CD8-positive, alpha-beta memory T cell (primary cell): ENCODE measurements at regions of chr14 and their contacts with region 1.

Region 1: DNA sequence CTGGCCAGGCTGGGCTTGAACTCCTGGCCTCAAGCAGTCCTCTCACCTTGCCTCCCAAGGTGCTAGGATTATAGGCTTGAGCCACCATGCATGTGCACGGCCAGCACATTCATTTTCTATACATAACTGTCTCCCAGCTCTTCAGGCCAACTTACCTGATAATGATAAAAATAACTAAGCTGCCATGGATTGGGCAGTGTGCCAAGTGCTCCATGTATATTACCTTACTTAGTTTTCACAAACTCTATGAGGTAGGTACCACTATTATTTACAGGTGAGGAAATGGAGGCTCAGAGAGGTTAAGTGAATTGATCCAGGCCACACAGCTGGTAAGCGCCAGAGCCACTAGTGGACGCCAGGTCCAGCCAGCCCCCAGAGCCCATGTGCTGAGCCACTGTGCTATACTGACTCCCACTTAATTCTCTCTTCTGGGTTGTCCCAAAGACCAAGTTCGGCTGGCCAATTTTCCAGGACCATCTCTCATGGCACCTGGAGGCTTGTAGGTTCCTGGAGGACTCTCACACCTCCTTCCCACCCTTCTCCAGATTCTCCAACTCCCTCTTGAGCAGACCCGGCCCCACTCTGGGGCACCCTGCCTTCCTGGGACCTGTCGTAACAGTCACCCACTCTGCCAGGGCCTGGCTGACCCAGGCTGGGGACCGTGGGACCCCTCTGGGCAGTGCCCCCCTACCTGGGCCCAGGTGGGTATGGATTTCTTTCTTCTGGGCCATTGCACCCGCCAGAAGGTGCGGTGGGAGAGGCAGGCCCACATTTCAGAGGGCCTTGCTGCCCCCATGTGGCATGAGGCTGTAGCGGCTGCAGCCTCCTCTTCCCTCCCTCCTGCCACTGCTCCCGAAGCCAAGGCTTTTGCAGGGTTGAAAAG is 30.2 kb upstream of the CIPC start:
- DNase-seq: peak; percentile 25 to 64 (median 34)
- H3K4me3 ChIP-seq: no peak overlapping the region
- H3K4me3 Mint-ChIP-seq: no peak overlapping the region
- H3K27ac ChIP-seq: no peak overlapping the region
- H3K27ac Mint-ChIP-seq: no peak overlapping the region
- H3K4me1 ChIP-seq: no peaks in the 10 kb centered on the region
- H3K4me1 Mint-ChIP-seq: no peaks in the 10 kb centered on the region
- H3K27me3 ChIP-seq: peaks cover 16% of the 10 kb centered on the region
- H3K27me3 Mint-ChIP-seq: peaks cover 11 to 29% of the 10 kb centered on the region in 2 donors

Region 2: GRCh38 chr14:76887196-76887595 is 180.7 kb before region 1 on chr14:
- CTCF ChIA-PET with region 1: interaction called, 14 read pairs
- POLR2A ChIA-PET with region 1: no interaction called
- DNase-seq: no peak
- H3K4me3 ChIP-seq: no peak overlapping the region
- H3K4me3 Mint-ChIP-seq: no peak overlapping the region
- H3K27ac ChIP-seq: no peak overlapping the region
- H3K27ac Mint-ChIP-seq: peak overlapping the region in 1 of 8 donors; percentile 61
- H3K4me1 ChIP-seq: no peaks in the 10 kb centered on the region
- H3K4me1 Mint-ChIP-seq: no peaks in the 10 kb centered on the region
- H3K27me3 ChIP-seq: no peaks in the 10 kb centered on the region
- H3K27me3 Mint-ChIP-seq: peaks cover 3 to 15% of the 10 kb centered on the region in 2 donors

Region 3: GRCh38 chr14:76910371-76910890 is 157.4 kb before region 1 on chr14:
- CTCF ChIA-PET with region 1: interaction called, 48 read pairs
- POLR2A ChIA-PET with region 1: no interaction called
- DNase-seq: no peak
- H3K4me3 ChIP-seq: no peak overlapping the region
- H3K4me3 Mint-ChIP-seq: no peak overlapping the region
- H3K27ac ChIP-seq: no peak overlapping the region
- H3K27ac Mint-ChIP-seq: no peak overlapping the region
- H3K4me1 ChIP-seq: peaks cover 23% of the 10 kb centered on the region
- H3K4me1 Mint-ChIP-seq: peaks cover 15 to 21% (median 16%) of the 10 kb centered on the region in 3 donors
- H3K27me3 ChIP-seq: no peaks in the 10 kb centered on the region
- H3K27me3 Mint-ChIP-seq: no peaks in the 10 kb centered on the region

Region 4: DNA sequence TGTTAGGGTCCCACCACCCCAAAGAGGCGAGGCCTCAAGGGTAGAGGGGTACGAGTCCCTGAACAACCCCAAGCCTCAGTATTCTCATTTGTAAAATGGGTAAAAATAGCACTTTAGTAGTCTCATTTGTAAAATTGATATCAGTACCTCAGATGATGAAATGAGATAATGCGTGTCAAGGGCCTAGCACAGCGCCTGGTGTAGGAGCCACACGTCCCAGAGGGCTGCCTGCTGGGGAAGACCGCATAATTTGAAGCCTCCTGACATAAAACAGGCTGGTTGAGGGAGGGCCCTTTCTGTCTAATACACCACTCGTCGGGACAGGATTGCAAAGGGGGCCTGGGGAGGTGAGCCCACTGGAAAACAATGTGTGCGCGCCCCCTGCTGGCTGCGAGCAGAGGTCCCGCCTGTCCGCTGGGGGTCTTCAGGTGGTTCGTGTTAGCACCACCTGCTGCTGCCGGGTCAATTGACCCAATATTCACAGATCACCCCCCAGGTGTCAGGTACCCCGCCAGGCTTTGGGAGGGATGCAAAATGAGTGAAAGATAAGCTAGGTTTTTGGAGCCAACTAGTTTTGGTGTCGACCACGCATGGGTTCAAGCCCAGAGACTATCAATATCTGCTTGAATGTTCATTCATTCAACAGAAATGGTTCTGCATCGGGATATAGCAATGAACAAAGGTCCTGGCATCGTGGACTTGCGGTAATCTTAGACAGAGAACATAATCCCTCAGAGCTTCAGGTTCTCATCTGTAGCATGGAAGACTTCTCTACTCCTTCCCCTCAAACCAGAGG is 14.6 kb before region 1 on chr14:
- CTCF ChIA-PET with region 1: interaction called, 16 read pairs
- POLR2A ChIA-PET with region 1: no interaction called
- DNase-seq: peak; percentile 72 to 85 (median 72)
- H3K4me3 ChIP-seq: no peak overlapping the region
- H3K4me3 Mint-ChIP-seq: no peak overlapping the region
- H3K27ac ChIP-seq: no peak overlapping the region
- H3K27ac Mint-ChIP-seq: peak overlapping the region in 5 of 8 donors; percentile 24 to 51 (median 36)
- H3K4me1 ChIP-seq: peaks cover 9% of the 10 kb centered on the region
- H3K4me1 Mint-ChIP-seq: peaks cover 4 to 15% (median 14%) of the 10 kb centered on the region in 3 donors
- H3K27me3 ChIP-seq: no peaks in the 10 kb centered on the region
- H3K27me3 Mint-ChIP-seq: no peaks in the 10 kb centered on the region

Region 5: DNA sequence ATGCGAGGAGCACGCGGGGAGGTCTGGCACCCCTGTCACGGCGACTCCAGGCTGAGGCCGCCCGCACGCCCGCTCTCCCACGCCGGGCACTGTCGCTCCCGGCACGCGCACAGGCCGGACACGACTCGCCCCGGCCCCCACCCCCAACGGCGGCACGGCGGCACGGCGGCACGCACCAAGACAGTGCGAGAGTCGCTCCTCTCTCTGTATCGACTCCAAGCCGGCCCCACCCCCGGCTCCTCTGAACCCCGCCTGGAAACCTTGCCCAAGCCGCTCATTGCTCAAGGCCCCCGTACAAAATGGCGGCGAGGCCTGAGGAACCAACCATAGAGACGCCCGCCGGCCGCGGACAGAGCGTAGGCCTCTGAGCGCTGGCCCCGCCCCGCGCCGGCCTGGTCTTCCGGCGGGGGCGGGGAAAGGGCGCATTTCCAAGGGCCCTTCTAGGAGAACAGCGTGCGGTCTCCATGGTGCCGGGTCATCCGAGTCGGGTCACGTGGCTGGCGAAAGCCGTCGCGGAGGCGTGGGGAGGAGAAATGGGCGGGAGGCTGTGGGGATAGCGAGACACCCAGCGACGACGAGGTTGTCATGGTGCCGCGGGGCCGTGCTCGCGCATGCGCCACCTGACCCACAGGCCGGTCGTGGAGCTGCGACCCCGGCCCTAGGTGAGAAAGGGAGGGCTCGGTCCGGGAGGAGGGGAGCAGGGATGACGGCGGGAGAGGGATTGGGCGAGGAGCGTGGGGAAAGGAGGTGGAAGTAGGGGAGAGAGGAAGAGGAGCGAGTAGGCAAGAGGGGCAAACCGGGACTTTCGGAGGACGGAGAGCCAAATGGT is 30.0 kb after region 1 on chr14 and contains the start of gene CIPC:
- CTCF ChIA-PET with region 1: interaction called, 12 read pairs
- POLR2A ChIA-PET with region 1: no interaction called
- DNase-seq: peak; percentile 98 to 100 (median 99)
- H3K4me3 ChIP-seq: peak within 1 kb of the TSS; percentile 76
- H3K4me3 Mint-ChIP-seq: peak within 1 kb of the TSS; percentile 88 to 100 (median 92)
- H3K27ac ChIP-seq: peak within 1 kb of the TSS; percentile 97
- H3K27ac Mint-ChIP-seq: peak within 1 kb of the TSS; percentile 91 to 100 (median 97)
- H3K4me1 ChIP-seq: peaks cover 20% of the 10 kb centered on the region
- H3K4me1 Mint-ChIP-seq: peaks cover 26 to 61% (median 49%) of the 10 kb centered on the region in 3 donors
- H3K27me3 ChIP-seq: no peaks in the 10 kb centered on the region
- H3K27me3 Mint-ChIP-seq: no peaks in the 10 kb centered on the region
- total RNA-seq, gene CIPC: 10.5 to 12.7 TPM